AG04450 (cell line): ENCODE measurements at regions of chr7 and their contacts with region 1.

Region 1: DNA sequence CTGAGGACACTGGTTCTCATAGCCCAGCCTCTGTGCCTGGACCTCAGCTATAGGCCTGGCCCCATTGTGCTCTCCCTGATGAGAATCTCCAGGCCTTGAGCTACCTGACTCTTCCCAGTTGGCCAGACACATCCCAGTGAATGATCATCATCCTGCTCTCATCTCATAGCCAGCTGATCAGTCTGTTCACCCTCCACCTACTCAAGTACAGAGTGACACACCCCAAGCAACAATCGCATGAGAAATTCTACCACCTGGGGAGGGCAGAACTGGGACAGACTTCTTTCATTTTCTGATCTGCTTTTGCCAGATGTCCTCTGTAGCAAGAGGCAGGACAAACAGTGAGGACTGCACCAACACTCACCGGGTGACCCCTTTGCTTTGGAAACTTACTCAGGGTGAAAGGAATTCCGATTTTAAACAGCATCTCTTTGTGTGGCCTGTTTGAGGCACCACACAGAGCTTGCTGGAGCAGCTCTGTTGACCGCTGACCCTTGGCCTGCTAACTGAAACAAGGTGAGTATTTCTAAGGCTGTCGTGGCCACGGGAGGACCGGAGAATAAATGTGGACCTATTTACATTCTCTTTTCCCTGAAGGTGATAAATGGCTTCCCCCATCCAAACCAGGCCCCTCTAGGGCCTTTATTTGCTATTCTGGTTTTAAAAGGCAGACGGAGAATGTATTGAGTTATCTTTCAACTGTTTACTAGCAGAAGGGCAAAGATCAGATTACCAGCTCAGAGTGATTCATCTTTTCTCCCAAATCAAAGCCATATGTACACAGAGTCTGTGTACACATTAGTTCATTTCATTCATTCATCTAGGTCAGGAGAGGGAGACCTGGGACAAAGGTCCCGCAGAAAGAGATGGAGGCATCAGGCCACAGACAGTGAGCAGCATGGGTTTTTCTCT is 181.4 kb upstream of the TNS3 start:
- DNase-seq: peak; percentile 91
- H3K4me3 ChIP-seq: no peak overlapping the region
- H3K27ac ChIP-seq: peak overlapping the region; percentile 97
- H3K27me3 ChIP-seq: no peaks in the 10 kb centered on the region
- CTCF ChIP-seq: no peak

Region 2: GRCh38 chr7:47786557-47787248 is 23.4 kb after region 1 on chr7:
- CTCF ChIA-PET with region 1: interaction called, 5 read pairs
- POLR2A ChIA-PET with region 1: interaction called, 17 read pairs
- DNase-seq: peak; percentile 96
- H3K4me3 ChIP-seq: no peak overlapping the region
- H3K27ac ChIP-seq: peak overlapping the region; percentile 97
- H3K27me3 ChIP-seq: no peaks in the 10 kb centered on the region
- CTCF ChIP-seq: no peak

Region 3: GRCh38 chr7:48224042-48224441 is 460.7 kb after region 1 on chr7:
- CTCF ChIA-PET with region 1: no interaction called
- POLR2A ChIA-PET with region 1: no interaction called
- DNase-seq: no peak
- H3K4me3 ChIP-seq: no peak overlapping the region
- H3K27ac ChIP-seq: no peak overlapping the region
- H3K27me3 ChIP-seq: peaks cover 4% of the 10 kb centered on the region
- CTCF ChIP-seq: no peak